Activated T-helper 2 cell treated with anti-CD3 and anti-CD28 coated beads, Interferon-gamma antibody, Interleukin-2, Interleukin-4, amounts not matched to agents 10 μg/mL and 5 μg/mL and 100 μg/mL, durations not matched to agents 14 hours and 24 hours and 36 hours (primary cell): ENCODE measurements at regions of chr20 and their contacts with region 1.

Region 1: GRCh38 chr20:1212607-1213396 is 9.5 kb downstream of the C20orf202 start:
- DNase-seq: peak; percentile 60
- H3K4me3 Mint-ChIP-seq: no peak overlapping the region
- H3K27ac Mint-ChIP-seq: no peak overlapping the region
- H3K4me1 Mint-ChIP-seq: peaks cover 32% of the 10 kb centered on the region
- H3K27me3 Mint-ChIP-seq: peaks cover 18% of the 10 kb centered on the region

Region 2: DNA sequence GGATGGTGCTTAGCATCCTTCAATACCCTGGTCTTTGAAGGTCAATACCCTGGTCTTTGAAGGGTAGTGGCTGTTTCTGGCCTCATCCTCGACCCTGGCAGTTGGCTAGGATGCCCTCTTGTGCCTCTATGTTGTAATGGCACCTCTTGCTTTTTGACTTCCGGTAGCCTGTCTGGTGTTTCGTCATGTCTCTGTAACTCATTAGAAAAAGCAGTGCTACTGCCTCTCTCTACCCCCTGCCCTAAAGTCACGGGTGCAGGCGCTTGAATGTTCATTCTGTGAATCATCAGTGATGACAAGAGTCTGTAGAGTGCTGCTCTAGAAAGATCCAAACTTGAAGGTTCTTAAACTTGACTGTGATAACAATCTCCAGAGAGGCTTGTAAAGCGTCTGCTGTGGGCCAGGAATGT is 239.0 kb before region 1 on chr20:
- intact Hi-C with region 1: loop called (anchors 10 kb)
- DNase-seq: peak; percentile 19
- H3K4me3 Mint-ChIP-seq: no peak overlapping the region
- H3K27ac Mint-ChIP-seq: no peak overlapping the region
- H3K4me1 Mint-ChIP-seq: peaks cover 3% of the 10 kb centered on the region
- H3K27me3 Mint-ChIP-seq: peaks cover 1% of the 10 kb centered on the region

Region 3: DNA sequence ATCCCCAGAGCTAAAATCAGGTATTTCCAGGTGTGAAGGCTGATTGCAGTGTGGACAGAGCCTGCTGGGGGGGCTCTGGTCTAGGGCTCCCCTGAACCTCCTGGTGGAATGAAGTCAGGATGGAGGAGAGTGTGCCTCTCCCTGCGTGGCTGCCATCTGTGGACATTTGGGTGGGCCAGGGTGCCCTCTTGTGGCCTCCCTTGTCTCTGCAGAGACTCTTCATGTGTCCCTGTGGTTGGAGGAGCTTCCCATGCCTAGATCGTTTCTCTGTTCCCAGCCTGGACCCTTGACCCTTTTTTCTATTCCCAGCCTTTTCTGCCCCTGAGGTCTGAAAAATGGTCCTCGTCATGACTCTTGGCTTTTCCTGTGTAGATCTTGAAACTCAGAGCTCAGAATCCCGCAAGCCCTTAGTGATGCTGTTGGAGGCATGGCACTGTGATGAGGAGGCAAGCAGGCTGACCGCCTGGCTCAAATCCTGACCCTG is 104.3 kb before region 1 on chr20:
- intact Hi-C with region 1: loop called (anchors 2 kb)
- DNase-seq: no peak
- H3K4me3 Mint-ChIP-seq: no peak overlapping the region
- H3K27ac Mint-ChIP-seq: no peak overlapping the region
- H3K4me1 Mint-ChIP-seq: no peaks in the 10 kb centered on the region
- H3K27me3 Mint-ChIP-seq: peaks cover 3% of the 10 kb centered on the region

Region 4: DNA sequence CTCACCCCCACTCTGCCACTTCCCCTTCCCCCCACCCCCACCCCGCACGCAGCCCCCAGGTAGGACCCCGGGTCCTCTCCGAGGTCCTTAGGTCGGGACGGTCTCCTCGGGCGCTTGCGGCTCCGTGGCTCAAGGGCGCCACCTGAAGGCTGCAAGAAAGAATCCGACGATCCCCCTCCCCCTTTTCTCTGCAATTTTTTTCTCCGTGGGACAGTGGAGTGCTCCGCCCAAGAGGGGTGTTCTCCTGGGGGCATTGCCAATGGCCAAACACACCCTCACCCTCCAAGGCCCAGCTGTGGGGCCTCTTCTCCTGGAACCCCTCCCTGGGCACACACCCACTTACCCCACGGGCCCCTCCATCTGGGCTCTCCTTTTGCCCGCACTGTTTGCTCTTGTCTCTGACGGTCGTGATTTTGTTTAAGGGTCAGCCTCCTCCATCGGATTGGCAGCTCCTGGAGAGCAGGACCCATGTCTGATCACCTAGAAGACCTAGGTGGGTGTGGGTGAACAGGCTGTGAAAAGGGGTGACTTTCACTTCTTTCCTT is 26.9 kb before region 1 on chr20:
- intact Hi-C with region 1: no loop called
- DNase-seq: peak; percentile 42
- H3K4me3 Mint-ChIP-seq: peak overlapping the region; percentile 69
- H3K27ac Mint-ChIP-seq: no peak overlapping the region
- H3K4me1 Mint-ChIP-seq: peaks cover 8% of the 10 kb centered on the region
- H3K27me3 Mint-ChIP-seq: peaks cover 36% of the 10 kb centered on the region

Region 5: GRCh38 chr20:1291191-1291741 is 78.5 kb after region 1 on chr20:
- intact Hi-C with region 1: no loop called
- DNase-seq: no peak
- H3K4me3 Mint-ChIP-seq: no peak overlapping the region
- H3K27ac Mint-ChIP-seq: no peak overlapping the region
- H3K4me1 Mint-ChIP-seq: peaks cover 16% of the 10 kb centered on the region
- H3K27me3 Mint-ChIP-seq: no peaks in the 10 kb centered on the region

Region 6: GRCh38 chr20:1466211-1467081 is 253.6 kb after region 1 on chr20 and contains the start of gene NSFL1C:
- intact Hi-C with region 1: loop called (anchors 10 kb)
- DNase-seq: peak; percentile 97
- H3K4me3 Mint-ChIP-seq: peak within 1 kb of the TSS; percentile 85
- H3K27ac Mint-ChIP-seq: peak within 1 kb of the TSS; percentile 79
- H3K4me1 Mint-ChIP-seq: peaks cover 39% of the 10 kb centered on the region
- H3K27me3 Mint-ChIP-seq: peaks cover 16% of the 10 kb centered on the region
- total RNA-seq, gene NSFL1C: 108 TPM in 2 replicates